ENCODE measurements at regions of chr12 and their contacts with region 1.

Region 1: GRCh38 chr12:55973598-55974307 is at the start of gene RAB5B:
- DNase-seq: peak; percentile 99
- H3K4me3 Mint-ChIP-seq: no peak within 1 kb of the TSS
- H3K27ac Mint-ChIP-seq: no peak within 1 kb of the TSS
- H3K4me1 Mint-ChIP-seq: peaks cover 19% of the 10 kb centered on the region
- H3K27me3 Mint-ChIP-seq: no peaks in the 10 kb centered on the region
- total RNA-seq, gene RAB5B: 44.8 to 46.4 TPM

Region 2: DNA sequence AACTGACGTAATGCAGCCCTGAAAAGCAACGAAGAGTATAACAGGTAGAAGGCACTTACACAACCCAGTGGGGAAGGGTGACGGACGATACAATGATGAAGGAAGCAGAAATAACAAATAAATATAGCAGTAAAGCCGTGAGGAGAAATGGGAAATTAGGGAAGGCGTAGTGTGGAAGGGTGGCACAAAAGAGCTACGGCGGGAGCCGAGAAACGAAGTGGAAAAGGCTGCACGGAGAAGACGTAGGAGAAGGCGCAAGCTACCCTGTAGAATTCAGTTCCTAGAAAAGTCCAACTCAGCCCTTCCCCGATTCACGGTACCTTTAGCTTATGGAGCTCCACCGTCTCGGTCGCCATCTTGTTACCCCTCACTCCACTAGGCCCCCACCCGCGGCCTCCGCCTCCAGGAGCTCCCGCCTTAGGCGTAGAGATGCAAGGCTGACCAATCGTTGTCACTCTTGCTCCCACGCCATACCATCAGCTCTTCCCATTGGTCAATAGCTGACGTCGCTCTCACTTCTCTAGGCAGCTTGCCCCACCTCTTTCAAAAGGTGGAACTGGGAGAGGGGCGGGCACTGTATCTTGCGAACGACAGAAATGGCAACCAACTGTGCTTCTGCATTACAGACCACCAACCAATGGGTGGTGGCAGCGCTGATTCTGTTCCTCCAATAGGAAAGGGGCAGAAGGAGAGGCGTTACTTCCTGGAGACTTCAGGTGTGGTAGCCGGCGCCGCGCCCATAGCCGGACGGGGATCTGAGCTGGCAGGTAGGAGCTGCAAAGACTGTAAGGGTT is 156.2 kb before region 1 on chr12 and contains the starts of genes ORMDL2 and SARNP:
- CTCF ChIA-PET with region 1: no interaction called
- POLR2A ChIA-PET with region 1: interaction called, 5 read pairs
- intact Hi-C with region 1: loop called (anchors 1 kb)
- DNase-seq: peak; percentile 99
- H3K4me3 Mint-ChIP-seq: no peak within 1 kb of the TSS
- H3K27ac Mint-ChIP-seq: no peak within 1 kb of the TSS
- H3K4me1 Mint-ChIP-seq: peaks cover 49% of the 10 kb centered on the region
- H3K27me3 Mint-ChIP-seq: no peaks in the 10 kb centered on the region
- total RNA-seq, gene ORMDL2: 37.9 to 41.2 TPM
- total RNA-seq, gene SARNP: 104 to 110 TPM

Region 3: DNA sequence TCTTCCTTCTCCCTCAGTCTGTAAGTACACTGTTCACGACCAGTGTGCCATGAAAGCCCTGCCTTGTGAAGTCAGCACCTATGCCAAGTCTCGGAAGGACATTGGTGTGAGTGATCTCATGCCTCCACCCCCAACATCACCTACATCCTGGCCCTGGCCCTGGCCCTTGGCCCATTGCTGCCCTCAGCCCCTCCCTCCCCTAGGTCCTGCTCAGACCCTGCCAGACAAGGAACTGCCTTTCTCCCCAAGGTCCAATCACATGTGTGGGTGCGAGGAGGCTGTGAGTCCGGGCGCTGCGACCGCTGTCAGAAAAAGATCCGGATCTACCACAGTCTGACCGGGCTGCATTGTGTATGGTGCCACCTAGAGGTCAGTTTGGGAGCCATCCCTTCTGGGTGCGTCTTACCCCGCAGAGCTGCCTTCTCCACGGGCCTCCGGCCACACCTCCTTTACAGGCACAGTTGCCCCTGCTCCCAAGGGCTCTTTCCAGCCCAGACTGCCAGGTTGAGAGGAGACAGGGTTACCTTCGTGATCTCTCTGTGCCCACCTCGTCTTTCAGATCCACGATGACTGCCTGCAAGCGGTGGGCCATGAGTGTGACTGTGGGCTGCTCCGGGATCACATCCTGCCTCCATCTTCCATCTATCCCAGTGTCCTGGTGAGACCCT is 33.6 kb before region 1 on chr12:
- CTCF ChIA-PET with region 1: interaction called, 13 read pairs
- POLR2A ChIA-PET with region 1: interaction called, 3 read pairs
- intact Hi-C with region 1: no loop called
- DNase-seq: peak; percentile 89
- H3K4me3 Mint-ChIP-seq: no peak overlapping the region
- H3K27ac Mint-ChIP-seq: peak overlapping the region; percentile 55
- H3K4me1 Mint-ChIP-seq: peaks cover 78% of the 10 kb centered on the region
- H3K27me3 Mint-ChIP-seq: no peaks in the 10 kb centered on the region

Region 4: DNA sequence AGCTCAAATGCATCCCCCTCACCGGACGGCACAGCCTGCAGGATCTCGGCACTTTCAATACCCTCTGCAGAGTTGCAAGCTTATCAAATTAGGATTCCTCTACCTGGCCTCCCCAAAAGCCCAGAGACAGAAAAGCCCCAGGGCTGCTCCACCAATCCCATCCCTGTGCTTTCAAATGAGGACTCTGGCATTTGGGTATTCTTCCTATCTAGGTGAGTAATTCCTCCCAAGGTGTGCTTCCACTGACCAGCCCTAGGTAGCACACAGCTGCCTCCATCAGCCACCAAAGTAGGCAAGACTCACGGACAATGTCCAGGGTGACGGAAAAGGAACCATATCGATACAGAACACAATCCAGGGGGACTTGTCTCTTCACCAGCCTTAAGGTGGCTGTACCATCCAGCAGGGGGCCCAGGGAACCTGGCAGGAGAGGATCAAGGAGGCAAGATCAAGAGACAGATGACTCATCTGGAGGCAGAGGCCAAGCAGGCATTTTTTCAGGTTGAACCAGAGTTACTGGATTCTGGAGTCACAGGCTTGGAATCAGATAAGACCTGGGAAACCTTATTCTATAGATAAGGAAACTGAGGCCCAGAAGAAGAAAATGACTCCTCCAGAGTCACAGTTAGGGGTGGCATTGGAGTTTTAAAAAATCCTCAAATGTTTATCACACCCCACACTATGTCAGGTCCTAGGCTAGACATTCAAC is 17.8 kb before region 1 on chr12:
- CTCF ChIA-PET with region 1: no interaction called
- POLR2A ChIA-PET with region 1: interaction called, 15 read pairs
- intact Hi-C with region 1: no loop called
- DNase-seq: peak; percentile 69
- H3K4me3 Mint-ChIP-seq: no peak overlapping the region
- H3K27ac Mint-ChIP-seq: peak overlapping the region; percentile 59
- H3K4me1 Mint-ChIP-seq: peaks cover 20% of the 10 kb centered on the region
- H3K27me3 Mint-ChIP-seq: no peaks in the 10 kb centered on the region

Region 5: DNA sequence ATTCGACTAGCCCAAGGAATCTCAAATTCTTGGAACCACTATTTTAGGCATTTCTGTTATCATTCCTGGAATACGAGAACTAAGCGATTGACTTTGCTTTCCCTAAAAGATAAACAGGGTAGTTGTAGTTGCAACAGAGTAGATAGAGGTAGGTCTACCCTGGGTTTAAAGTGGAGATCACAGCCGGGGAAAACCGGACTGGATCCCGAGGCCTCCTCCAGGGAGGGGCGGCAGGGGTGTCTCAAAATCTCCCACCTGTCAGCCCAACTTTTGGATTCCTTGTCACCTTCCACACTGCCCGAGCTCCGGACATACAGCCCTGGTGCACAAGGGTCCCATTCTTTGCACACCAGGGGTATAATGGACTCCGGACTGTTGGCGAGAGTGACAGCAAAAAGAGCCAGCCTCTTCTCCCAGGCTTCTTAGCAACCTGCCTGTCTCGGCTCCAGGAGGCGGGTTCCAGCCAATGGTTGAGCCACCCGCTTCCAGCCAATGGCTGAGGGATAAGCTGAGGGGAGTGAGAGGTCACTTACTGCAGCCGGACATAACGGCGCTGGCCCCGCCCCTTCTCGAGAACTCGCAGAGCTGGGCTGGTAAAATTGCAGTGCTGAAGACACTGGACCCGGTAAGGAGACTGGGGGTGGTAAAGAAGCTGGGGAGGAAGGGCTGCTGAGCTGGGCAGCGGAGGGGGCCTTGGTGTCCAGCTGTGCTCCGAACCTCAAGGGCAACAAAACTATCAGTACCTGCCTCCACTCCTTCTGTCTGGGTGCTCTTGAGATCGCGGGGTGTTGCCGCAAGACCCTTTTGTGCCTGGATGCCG is 23.2 kb after region 1 on chr12 and contains the start of gene SUOX:
- CTCF ChIA-PET with region 1: interaction called, 30 read pairs
- POLR2A ChIA-PET with region 1: no interaction called
- intact Hi-C with region 1: no loop called
- DNase-seq: peak; percentile 61
- H3K4me3 Mint-ChIP-seq: peak within 1 kb of the TSS; percentile 60
- H3K27ac Mint-ChIP-seq: no peak within 1 kb of the TSS
- H3K4me1 Mint-ChIP-seq: peaks cover 19% of the 10 kb centered on the region
- H3K27me3 Mint-ChIP-seq: peaks cover 5% of the 10 kb centered on the region
- total RNA-seq, gene SUOX: 2.4 to 2.7 TPM

Region 6: GRCh38 chr12:56007564-56008559 is 34.1 kb after region 1 on chr12:
- CTCF ChIA-PET with region 1: no interaction called
- POLR2A ChIA-PET with region 1: interaction called, 3 read pairs
- intact Hi-C with region 1: loop called (anchors 2 kb)
- DNase-seq: peak; percentile 71
- H3K4me3 Mint-ChIP-seq: peak overlapping the region; percentile 79
- H3K27ac Mint-ChIP-seq: peak overlapping the region; percentile 69
- H3K4me1 Mint-ChIP-seq: peaks cover 24% of the 10 kb centered on the region
- H3K27me3 Mint-ChIP-seq: no peaks in the 10 kb centered on the region

Measured in activated CD4-positive, alpha-beta memory T cell treated with anti-CD3 and anti-CD28 coated beads for 36 hours (primary cell).